Panc1 (cell line): ENCODE measurements at regions of chr10 and their contacts with region 1.

Region 1: GRCh38 chr10:110815354-110816004 is 56.2 kb upstream of the PDCD4 start:
- DNase-seq: no peak
- ATAC-seq: 0 out of 2 replicates have a peak, but pooled peaks have one; percentile 38
- H3K4me3 ChIP-seq: no peak overlapping the region
- H3K27ac ChIP-seq: no peak overlapping the region
- H3K4me1 ChIP-seq: no peaks in the 10 kb centered on the region
- H3K27me3 ChIP-seq: no peaks in the 10 kb centered on the region
- CTCF ChIP-seq: no peak

Region 2: GRCh38 chr10:110845743-110846700 is 30.5 kb after region 1 on chr10:
- CTCF ChIA-PET with region 1: no interaction called
- POLR2A ChIA-PET with region 1: no interaction called
- in situ Hi-C with region 1: no loop called
- intact Hi-C with region 1: loop called (anchors 2 kb)
- DNase-seq: no peak
- ATAC-seq: no peak
- H3K4me3 ChIP-seq: no peak overlapping the region
- H3K27ac ChIP-seq: no peak overlapping the region
- H3K4me1 ChIP-seq: no peaks in the 10 kb centered on the region
- H3K27me3 ChIP-seq: no peaks in the 10 kb centered on the region
- CTCF ChIP-seq: no peak